ENCODE measurements at regions of chr10 and their contacts with region 1.

Region 1: DNA sequence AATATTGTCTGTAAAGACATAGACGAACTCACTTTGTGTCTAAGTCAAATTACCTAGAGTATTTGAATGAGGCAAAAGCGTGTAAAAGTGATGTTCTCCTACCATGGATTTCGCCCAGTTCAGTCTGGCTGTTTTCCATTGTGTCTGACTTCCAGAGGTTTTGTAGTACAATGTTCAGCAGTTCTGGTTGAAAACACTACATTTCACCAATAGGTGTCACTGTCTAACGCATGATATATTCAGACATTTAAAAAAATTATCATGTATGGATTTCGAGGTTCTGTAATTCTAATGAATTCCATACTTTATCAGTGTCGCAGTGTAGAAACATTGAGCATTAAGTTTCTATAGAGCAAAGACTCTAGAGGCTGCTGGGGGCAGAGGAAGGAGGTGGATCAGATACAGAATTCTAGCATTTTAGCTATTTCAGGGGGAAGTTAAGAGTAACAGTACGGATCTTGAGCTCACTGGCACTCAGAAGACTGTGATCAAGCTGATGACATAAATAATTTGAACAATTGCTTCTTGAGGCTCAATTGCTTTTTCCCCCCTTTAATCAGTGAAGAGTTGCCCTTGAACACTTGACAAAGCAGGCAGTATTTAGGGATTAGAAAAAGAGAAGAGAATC is 196.9 kb upstream of the RHOBTB1 start:
- DNase-seq: no peak
- ATAC-seq: peak; percentile 58
- H3K4me3 Mint-ChIP-seq: no peak overlapping the region
- H3K27ac Mint-ChIP-seq: no peak overlapping the region
- H3K4me1 Mint-ChIP-seq: peaks cover 21% of the 10 kb centered on the region
- H3K27me3 Mint-ChIP-seq: peaks cover 4% of the 10 kb centered on the region
- CTCF ChIP-seq: no peak

Region 2: GRCh38 chr10:61078542-61079275 is 62.2 kb before region 1 on chr10:
- CTCF ChIA-PET with region 1: no interaction called
- POLR2A ChIA-PET with region 1: no interaction called
- intact Hi-C with region 1: no loop called
- DNase-seq: no peak
- ATAC-seq: no peak
- H3K4me3 Mint-ChIP-seq: no peak overlapping the region
- H3K27ac Mint-ChIP-seq: no peak overlapping the region
- H3K4me1 Mint-ChIP-seq: no peaks in the 10 kb centered on the region
- H3K27me3 Mint-ChIP-seq: peaks cover 3% of the 10 kb centered on the region
- CTCF ChIP-seq: no peak

Region 3: GRCh38 chr10:61125560-61126170 is 15.2 kb before region 1 on chr10:
- CTCF ChIA-PET with region 1: interaction called, 5 read pairs
- POLR2A ChIA-PET with region 1: interaction called, 8 read pairs
- intact Hi-C with region 1: loop called (anchors 2 kb)
- DNase-seq: no peak
- ATAC-seq: peak; percentile 49
- H3K4me3 Mint-ChIP-seq: peak overlapping the region; percentile 12
- H3K27ac Mint-ChIP-seq: peak overlapping the region; percentile 77
- H3K4me1 Mint-ChIP-seq: peaks cover 47% of the 10 kb centered on the region
- H3K27me3 Mint-ChIP-seq: no peaks in the 10 kb centered on the region
- CTCF ChIP-seq: no peak

Region 4: GRCh38 chr10:61164458-61165160 is 23.7 kb after region 1 on chr10:
- CTCF ChIA-PET with region 1: no interaction called
- POLR2A ChIA-PET with region 1: no interaction called
- intact Hi-C with region 1: no loop called
- DNase-seq: no peak
- ATAC-seq: no peak
- H3K4me3 Mint-ChIP-seq: no peak overlapping the region
- H3K27ac Mint-ChIP-seq: no peak overlapping the region
- H3K4me1 Mint-ChIP-seq: no peaks in the 10 kb centered on the region
- H3K27me3 Mint-ChIP-seq: no peaks in the 10 kb centered on the region
- CTCF ChIP-seq: no peak

Region 5: DNA sequence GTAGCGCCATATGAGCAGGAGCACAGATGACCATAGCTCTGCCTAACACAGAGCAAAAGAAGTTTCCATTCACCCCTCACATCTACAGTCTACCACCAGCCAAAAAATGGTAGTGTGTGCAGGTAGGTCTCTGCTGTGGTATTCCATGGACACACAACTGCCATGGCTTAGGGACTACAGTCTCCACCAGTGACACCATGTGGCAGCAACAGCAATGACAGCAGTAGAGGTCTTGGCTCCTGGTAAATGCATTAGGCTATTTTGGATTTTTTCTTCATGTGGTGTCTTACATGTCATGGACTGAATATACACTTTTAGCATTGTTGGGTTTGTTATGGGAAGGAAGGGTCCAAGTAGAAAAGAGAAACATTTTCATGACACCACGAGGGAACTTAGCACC is 451.7 kb after region 1 on chr10:
- CTCF ChIA-PET with region 1: interaction called, 3 read pairs
- POLR2A ChIA-PET with region 1: no interaction called
- intact Hi-C with region 1: loop called (anchors 1 kb)
- DNase-seq: no peak
- ATAC-seq: no peak
- H3K4me3 Mint-ChIP-seq: no peak overlapping the region
- H3K27ac Mint-ChIP-seq: no peak overlapping the region
- H3K4me1 Mint-ChIP-seq: peaks cover 8% of the 10 kb centered on the region
- H3K27me3 Mint-ChIP-seq: peaks cover 5% of the 10 kb centered on the region
- CTCF ChIP-seq: no peak

Region 6: DNA sequence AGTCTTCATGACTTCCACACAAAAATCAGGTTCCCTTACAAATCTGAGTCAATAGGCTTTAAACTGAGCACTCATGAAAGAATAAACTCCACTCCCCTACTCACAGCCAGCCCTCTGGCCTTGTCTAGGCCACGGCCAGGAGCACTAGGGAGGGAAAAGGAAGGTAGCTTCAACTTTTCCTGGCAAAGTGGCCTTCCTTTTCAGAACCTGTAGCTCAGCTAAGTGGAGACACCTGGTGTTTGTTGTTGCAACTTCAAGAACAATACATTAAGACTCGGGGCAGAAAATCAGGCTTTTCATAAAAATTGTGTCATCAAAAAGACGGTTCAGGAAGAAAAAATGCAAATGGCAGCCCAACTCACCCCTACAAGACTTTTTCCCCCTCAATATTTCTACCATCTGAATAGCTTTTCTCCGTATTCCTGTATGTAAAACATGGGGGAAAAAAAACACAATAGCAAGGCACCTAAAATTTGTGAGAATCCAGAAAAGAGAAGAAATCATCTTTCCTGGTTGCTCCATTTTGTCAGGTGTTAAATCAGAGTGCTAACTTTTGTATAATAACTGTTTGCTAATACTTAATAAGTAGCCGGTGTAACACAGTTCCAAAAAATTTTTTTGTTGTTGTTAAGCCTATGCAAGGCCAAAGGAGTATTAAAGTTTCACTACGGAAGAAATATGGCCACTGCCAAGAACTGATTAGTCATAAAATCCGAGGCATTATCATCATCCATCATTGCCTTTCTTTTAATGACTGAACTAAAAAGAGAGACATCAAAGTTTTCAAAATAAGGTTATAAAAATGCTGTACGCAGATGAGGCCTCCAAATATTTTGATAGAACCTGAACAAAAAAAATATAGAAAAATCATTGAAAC is 694.4 kb after region 1 on chr10:
- CTCF ChIA-PET with region 1: interaction called, 7 read pairs
- POLR2A ChIA-PET with region 1: no interaction called
- intact Hi-C with region 1: loop called (anchors 1 kb)
- DNase-seq: no peak
- ATAC-seq: no peak
- H3K4me3 Mint-ChIP-seq: no peak overlapping the region
- H3K27ac Mint-ChIP-seq: no peak overlapping the region
- H3K4me1 Mint-ChIP-seq: no peaks in the 10 kb centered on the region
- H3K27me3 Mint-ChIP-seq: no peaks in the 10 kb centered on the region
- CTCF ChIP-seq: no peak